Brain microvascular endothelial cell (primary cell): ENCODE measurements at regions of chr6 and their contacts with region 1.

Region 1: GRCh38 chr6:56292505-56293181 is 45.3 kb upstream of the COL21A1 start:
- DNase-seq: peak; percentile 64
- H3K4me3 ChIP-seq: no peak overlapping the region
- H3K27ac ChIP-seq: no peak overlapping the region
- H3K27me3 ChIP-seq: no peaks in the 10 kb centered on the region
- CTCF ChIP-seq: peak; percentile 60

Region 2: GRCh38 chr6:55980627-55981211 is 311.9 kb before region 1 on chr6:
- in situ Hi-C with region 1: loop called (anchors 10 kb)
- DNase-seq: peak; percentile 17
- H3K4me3 ChIP-seq: no peak overlapping the region
- H3K27ac ChIP-seq: no peak overlapping the region
- H3K27me3 ChIP-seq: no peaks in the 10 kb centered on the region
- CTCF ChIP-seq: peak; percentile 59

Region 3: DNA sequence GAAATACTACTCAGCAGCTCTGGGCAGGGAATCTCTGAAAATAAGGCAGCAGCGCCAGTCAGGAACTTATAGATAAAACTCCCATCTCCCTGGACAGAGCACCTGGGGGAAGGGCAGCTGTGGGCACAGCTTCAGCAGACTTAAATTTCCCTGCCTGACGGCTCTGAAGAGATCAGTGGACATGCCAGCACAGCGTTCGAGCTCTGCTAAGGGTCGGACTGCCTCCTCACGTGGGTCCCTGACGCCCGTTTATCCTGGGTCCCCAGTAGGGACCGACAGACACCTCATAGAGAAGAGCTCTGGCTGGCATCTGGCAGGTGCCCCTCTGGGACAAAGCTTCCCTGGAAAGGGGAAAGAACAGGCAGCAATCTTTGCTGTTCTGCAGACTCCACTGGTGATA is 104.2 kb before region 1 on chr6:
- in situ Hi-C with region 1: no loop called
- DNase-seq: no peak
- H3K4me3 ChIP-seq: no peak overlapping the region
- H3K27ac ChIP-seq: no peak overlapping the region
- H3K27me3 ChIP-seq: no peaks in the 10 kb centered on the region
- CTCF ChIP-seq: no peak